ENCODE measurements at regions of chr4 and their contacts with region 1.

Region 1: GRCh38 chr4:102799816-102800215 is 27.5 kb downstream of the UBE2D3 start:
- DNase-seq: no peak
- ATAC-seq: no peak
- H3K4me3 Mint-ChIP-seq: no peak overlapping the region
- H3K27ac Mint-ChIP-seq: no peak overlapping the region
- H3K4me1 Mint-ChIP-seq: peaks cover 23% of the 10 kb centered on the region
- H3K27me3 Mint-ChIP-seq: no peaks in the 10 kb centered on the region
- CTCF ChIP-seq: no peak

Region 2: DNA sequence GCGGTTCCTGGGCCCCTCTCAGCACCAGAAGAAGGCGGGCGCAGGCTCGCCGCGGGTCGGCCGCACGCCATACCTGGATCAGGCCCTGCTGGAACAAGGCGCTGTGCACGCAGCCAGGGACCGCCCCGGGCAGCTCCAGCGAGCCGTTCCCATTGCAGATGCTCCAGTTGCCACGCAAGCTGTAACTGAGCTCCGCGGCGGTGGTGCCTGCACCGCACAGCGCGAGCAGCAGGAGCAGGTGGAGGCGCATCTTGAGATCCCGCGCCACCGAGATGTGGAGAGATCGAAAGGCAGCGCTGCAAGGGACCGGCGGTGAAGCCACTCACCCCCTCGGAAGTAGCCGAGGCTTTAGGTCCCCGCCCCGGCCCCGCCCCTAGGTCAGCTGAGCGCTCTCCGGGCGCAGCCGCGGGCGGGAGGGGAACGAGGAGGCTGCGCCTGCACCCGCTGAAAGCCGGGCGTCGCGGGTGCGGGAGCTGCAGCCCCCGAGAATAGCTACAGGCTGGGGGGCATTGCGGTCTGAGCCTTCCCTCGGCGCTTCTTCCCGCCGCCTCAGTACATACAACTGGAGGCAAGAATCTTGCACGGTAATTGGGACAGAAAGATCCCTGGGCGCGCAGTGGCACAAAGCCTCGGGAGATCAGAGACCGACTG is 39.0 kb before region 1 on chr4 and contains the start of gene MANBA:
- CTCF ChIA-PET with region 1: no interaction called
- POLR2A ChIA-PET with region 1: no interaction called
- intact Hi-C with region 1: loop called (anchors 5 kb)
- DNase-seq: peak; percentile 91
- ATAC-seq: peak; percentile 92
- H3K4me3 Mint-ChIP-seq: peak within 1 kb of the TSS; percentile 92
- H3K27ac Mint-ChIP-seq: peak within 1 kb of the TSS; percentile 86
- H3K4me1 Mint-ChIP-seq: peaks cover 27% of the 10 kb centered on the region
- H3K27me3 Mint-ChIP-seq: peaks cover 2% of the 10 kb centered on the region
- CTCF ChIP-seq: no peak
- total RNA-seq, gene MANBA: 14.5 to 16.3 TPM

Region 3: GRCh38 chr4:103019308-103020124 is 219.7 kb after region 1 on chr4 and contains the start of gene SLC9B1:
- CTCF ChIA-PET with region 1: no interaction called
- POLR2A ChIA-PET with region 1: no interaction called
- intact Hi-C with region 1: no loop called
- DNase-seq: peak; percentile 96
- ATAC-seq: peak; percentile 99
- H3K4me3 Mint-ChIP-seq: peak within 1 kb of the TSS; percentile 87
- H3K27ac Mint-ChIP-seq: peak within 1 kb of the TSS; percentile 99
- H3K4me1 Mint-ChIP-seq: peaks cover 15% of the 10 kb centered on the region
- H3K27me3 Mint-ChIP-seq: no peaks in the 10 kb centered on the region
- CTCF ChIP-seq: no peak
- total RNA-seq, gene SLC9B1: 1.9 to 2.4 TPM

Region 4: DNA sequence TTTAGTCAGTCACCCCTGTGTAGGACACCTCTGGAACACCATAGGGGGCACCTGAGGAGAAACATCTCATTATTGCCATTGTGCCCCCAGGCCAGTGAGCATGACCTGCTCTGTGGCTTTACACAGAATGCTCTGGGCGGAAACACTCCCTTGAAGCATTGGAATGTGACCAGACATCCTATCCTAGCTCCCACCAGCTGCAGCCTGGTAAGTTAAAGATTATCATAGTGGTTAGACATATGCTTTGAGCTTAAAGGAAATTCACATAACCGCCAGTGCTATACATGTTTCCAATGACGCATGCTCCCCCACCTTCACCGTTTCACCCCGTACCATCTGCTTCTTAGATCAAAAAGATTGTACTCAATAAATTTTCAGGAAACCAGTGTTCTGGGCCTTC is 616.0 kb after region 1 on chr4:
- CTCF ChIA-PET with region 1: no interaction called
- POLR2A ChIA-PET with region 1: no interaction called
- intact Hi-C with region 1: no loop called
- DNase-seq: no peak
- ATAC-seq: no peak
- H3K4me3 Mint-ChIP-seq: no peak overlapping the region
- H3K27ac Mint-ChIP-seq: no peak overlapping the region
- H3K4me1 Mint-ChIP-seq: no peaks in the 10 kb centered on the region
- H3K27me3 Mint-ChIP-seq: no peaks in the 10 kb centered on the region
- CTCF ChIP-seq: no peak

Measured in activated CD8-positive, alpha-beta T cell treated with anti-CD3 and anti-CD28 coated beads for 36 hours (primary cell).